PC-9 (cell line): ENCODE measurements at regions of chr14 and their contacts with region 1.

Region 1: GRCh38 chr14:36975835-36976234 is 196.6 kb downstream of the SLC25A21 start:
- DNase-seq: no peak
- H3K4me3 ChIP-seq: no peak overlapping the region
- H3K27ac ChIP-seq: peak overlapping the region; percentile 90
- H3K4me1 ChIP-seq: peaks cover 40% of the 10 kb centered on the region
- H3K27me3 ChIP-seq: no peaks in the 10 kb centered on the region
- CTCF ChIP-seq: no peak

Region 2: DNA sequence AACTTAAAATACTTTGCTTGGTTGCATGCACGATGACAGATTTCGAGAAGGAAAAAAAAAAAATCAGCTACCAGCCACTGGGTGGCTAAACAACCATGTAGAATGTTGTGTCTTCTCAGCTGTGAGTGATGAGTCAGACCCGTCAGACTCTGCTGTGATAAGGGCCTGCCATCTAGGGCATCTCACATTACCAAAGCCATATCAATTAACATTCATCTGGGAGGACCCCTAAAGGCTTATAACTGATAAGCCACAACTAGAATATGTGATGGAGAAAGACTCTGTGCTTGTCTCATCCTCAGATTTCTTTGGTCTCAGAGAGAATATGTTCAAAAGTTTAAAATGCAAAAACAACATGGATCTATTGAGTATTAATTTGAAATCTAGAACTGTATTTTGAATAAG is 202.7 kb before region 1 on chr14:
- CTCF ChIA-PET with region 1: no interaction called
- POLR2A ChIA-PET with region 1: no interaction called
- intact Hi-C with region 1: loop called (anchors 5 kb)
- DNase-seq: peak; percentile 18 to 57
- H3K4me3 ChIP-seq: no peak overlapping the region
- H3K27ac ChIP-seq: no peak overlapping the region
- H3K4me1 ChIP-seq: peaks cover 47% of the 10 kb centered on the region
- H3K27me3 ChIP-seq: no peaks in the 10 kb centered on the region
- CTCF ChIP-seq: peak; percentile 28; the same call in 1 of the 2 replicates

Region 3: GRCh38 chr14:36996133-36996856 is 20.5 kb after region 1 on chr14:
- CTCF ChIA-PET with region 1: interaction called, 3 read pairs
- POLR2A ChIA-PET with region 1: no interaction called
- intact Hi-C with region 1: loop called (anchors 2 kb)
- DNase-seq: peak; percentile 56 to 65
- H3K4me3 ChIP-seq: no peak overlapping the region
- H3K27ac ChIP-seq: peak overlapping the region; percentile 63
- H3K4me1 ChIP-seq: peaks cover 19% of the 10 kb centered on the region
- H3K27me3 ChIP-seq: no peaks in the 10 kb centered on the region
- CTCF ChIP-seq: no peak

Region 4: GRCh38 chr14:37142835-37143401 is 167.1 kb after region 1 on chr14:
- CTCF ChIA-PET with region 1: no interaction called
- POLR2A ChIA-PET with region 1: interaction called, 18 read pairs
- intact Hi-C with region 1: no loop called
- DNase-seq: peak in 1 of 2 experiments; percentile 11
- H3K4me3 ChIP-seq: no peak overlapping the region
- H3K27ac ChIP-seq: no peak overlapping the region
- H3K4me1 ChIP-seq: no peaks in the 10 kb centered on the region
- H3K27me3 ChIP-seq: no peaks in the 10 kb centered on the region
- CTCF ChIP-seq: no peak